ENCODE measurements at regions of chr15 and their contacts with region 1.

Region 1: DNA sequence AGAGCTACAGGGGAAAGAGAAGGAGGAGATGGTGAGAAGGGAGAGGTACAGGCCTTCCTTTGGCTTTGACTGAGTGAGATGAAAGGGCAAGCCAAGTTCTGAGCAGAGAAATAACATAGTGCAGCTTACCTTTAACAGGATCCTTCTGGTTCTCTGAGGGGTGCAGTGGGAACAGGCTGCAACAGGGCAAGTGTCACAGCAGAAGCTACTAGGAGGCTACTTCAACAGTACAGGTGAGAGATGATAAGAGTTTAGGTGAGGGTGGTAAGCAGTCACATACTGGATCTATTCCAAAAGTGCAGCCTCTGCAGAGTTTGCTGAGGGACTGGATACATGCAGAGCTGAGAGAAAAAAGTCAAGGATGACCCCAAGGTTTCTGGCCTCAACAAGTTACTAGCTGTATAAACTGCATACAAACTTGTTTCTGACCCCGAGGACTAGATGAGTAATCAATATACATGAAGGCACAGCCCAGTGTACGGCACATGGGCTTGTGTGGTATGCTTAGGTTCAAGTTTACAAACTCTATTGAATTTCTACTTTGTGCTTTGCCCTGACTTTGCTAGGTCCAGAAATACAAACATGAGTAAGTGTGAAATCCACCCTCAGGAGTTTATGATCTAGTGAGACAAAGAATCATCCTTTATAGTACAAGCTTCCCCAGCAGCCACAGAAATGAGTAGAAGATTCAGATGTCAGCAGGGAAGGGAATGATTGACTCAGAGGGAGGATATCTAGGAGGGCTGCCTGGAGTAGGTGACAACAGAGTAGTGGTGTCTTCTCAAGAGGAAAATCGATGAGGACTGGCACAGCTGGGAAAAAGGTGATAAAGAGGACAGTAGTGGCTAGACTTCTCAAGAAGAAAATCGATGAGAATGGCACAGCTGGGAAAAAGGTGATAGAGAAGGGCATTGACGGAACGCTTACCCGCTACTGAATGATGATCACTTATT is 78.2 kb upstream of the TJP1 start:
- DNase-seq: no peak
- ATAC-seq: no peak
- H3K4me3 ChIP-seq: no peak overlapping the region
- H3K27ac ChIP-seq: no peak overlapping the region
- H3K4me1 ChIP-seq: no peaks in the 10 kb centered on the region
- H3K27me3 ChIP-seq: no peaks in the 10 kb centered on the region
- CTCF ChIP-seq: no peak

Region 2: DNA sequence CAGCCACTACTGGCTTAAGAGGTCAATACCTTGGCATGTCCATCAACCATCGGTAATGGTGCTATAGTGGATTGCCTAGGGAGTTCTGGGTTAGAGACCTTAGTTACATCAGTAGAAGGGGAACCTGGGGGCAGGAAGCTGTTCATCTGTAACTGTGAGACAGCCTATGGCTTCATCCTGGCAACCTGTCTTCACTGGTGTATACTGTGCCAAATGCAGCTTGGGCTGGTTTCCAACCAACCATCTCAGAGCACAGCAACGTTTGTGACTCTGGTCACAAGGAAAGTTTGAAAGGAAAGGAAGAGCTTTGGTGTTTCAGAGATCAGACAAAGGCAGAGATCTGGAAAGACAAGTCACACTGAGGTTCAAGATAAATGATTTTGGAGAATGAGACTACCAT is 172.1 kb before region 1 on chr15:
- CTCF ChIA-PET with region 1: no interaction called
- POLR2A ChIA-PET with region 1: no interaction called
- in situ Hi-C with region 1: no loop called
- intact Hi-C with region 1: no loop called
- DNase-seq: no peak
- ATAC-seq: no peak
- H3K4me3 ChIP-seq: no peak overlapping the region
- H3K27ac ChIP-seq: no peak overlapping the region
- H3K4me1 ChIP-seq: no peaks in the 10 kb centered on the region
- H3K27me3 ChIP-seq: no peaks in the 10 kb centered on the region
- CTCF ChIP-seq: no peak

Region 3: DNA sequence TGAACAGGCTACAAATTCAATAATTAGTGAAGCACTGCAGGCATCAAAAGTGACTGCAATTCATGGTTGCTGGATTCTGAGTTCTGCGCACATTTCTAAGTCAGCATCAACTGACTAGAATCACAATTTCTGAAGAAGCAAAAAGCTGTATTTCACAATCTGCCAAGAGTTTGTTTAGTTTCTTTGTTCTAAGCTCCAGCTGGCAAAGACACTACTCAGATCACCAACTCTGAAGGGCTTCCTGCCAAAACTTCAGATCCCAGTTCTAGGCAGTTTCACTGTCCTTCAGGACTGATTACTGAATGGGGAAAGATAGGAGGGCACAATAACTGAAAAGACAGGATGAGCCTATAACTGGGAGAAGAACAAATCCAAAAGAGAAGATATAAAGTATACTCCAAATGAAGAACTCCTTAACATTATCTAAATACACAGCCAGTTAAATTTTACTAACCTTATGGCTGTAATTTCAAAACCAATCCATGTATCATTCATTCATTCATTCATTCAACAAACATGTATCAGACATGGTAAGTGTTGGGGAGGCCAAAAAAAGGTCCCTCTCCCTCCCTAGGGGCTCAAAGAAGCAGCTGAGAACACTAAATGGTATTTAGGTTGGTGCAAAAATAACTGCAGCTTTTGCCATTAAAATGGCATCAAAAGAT is 95.3 kb before region 1 on chr15:
- CTCF ChIA-PET with region 1: no interaction called
- POLR2A ChIA-PET with region 1: no interaction called
- in situ Hi-C with region 1: no loop called
- intact Hi-C with region 1: no loop called
- DNase-seq: no peak
- ATAC-seq: no peak
- H3K4me3 ChIP-seq: no peak overlapping the region
- H3K27ac ChIP-seq: no peak overlapping the region
- H3K4me1 ChIP-seq: peaks cover 25% of the 10 kb centered on the region
- H3K27me3 ChIP-seq: no peaks in the 10 kb centered on the region
- CTCF ChIP-seq: no peak

Region 4: DNA sequence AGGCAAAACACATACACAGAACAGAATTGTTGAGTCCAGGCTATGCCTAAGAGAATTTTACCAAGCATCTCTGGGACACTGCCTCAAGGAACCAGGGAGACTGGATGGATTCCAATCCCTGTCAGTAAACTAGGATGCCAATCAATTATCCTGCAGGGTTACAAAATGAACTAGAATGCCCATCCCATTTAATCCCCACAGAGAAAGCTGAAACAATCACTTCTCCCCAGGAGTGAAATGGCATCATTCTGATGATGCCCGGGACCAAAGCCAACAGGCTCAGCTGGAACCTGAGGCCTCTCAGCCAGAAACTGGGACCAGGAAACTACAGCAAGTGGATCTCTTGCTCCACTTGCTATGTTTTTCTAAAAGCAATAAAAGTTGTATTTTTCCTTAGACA is 51.7 kb after region 1 on chr15:
- CTCF ChIA-PET with region 1: interaction called, 14 read pairs
- POLR2A ChIA-PET with region 1: no interaction called
- in situ Hi-C with region 1: no loop called
- intact Hi-C with region 1: no loop called
- DNase-seq: no peak
- ATAC-seq: no peak
- H3K4me3 ChIP-seq: no peak overlapping the region
- H3K27ac ChIP-seq: no peak overlapping the region
- H3K4me1 ChIP-seq: no peaks in the 10 kb centered on the region
- H3K27me3 ChIP-seq: no peaks in the 10 kb centered on the region
- CTCF ChIP-seq: no peak

Measured in Panc1 (cell line).